Activated T-helper 1 cell treated with anti-CD3 and anti-CD28 coated beads, Interleukin-12 subunit alpha, Interleukin-12 subunit beta, Interleukin-2, Interleukin-4 antibody, amounts not matched to agents 30 ng/mL and 10 ng/mL and 1 ng/mL, durations not matched to agents 14 hours and 24 hours and 36 hours (primary cell): ENCODE measurements at regions of chr2 and their contacts with region 1.

Region 1: GRCh38 chr2:43773876-43774613 is at the start of gene DYNC2LI1:
- DNase-seq: peak; percentile 71
- H3K4me3 Mint-ChIP-seq: peak within 1 kb of the TSS; percentile 92
- H3K27ac Mint-ChIP-seq: peak within 1 kb of the TSS; percentile 79
- H3K4me1 Mint-ChIP-seq: peaks cover 19% of the 10 kb centered on the region
- H3K27me3 Mint-ChIP-seq: peaks cover 3% of the 10 kb centered on the region
- total RNA-seq, gene DYNC2LI1: 6.2 and 6.6 TPM in 2 replicates

Region 2: GRCh38 chr2:43637030-43637803 is 136.8 kb before region 1 on chr2 and contains the start of gene PLEKHH2:
- intact Hi-C with region 1: loop called (anchors 2 kb)
- DNase-seq: peak; percentile 81
- H3K4me3 Mint-ChIP-seq: peak within 1 kb of the TSS; percentile 84
- H3K27ac Mint-ChIP-seq: no peak within 1 kb of the TSS
- H3K4me1 Mint-ChIP-seq: peaks cover 6% of the 10 kb centered on the region
- H3K27me3 Mint-ChIP-seq: peaks cover 45% of the 10 kb centered on the region
- total RNA-seq, gene PLEKHH2: 0.12 and 0.13 TPM in 2 replicates

Region 3: GRCh38 chr2:43995733-43996533 is 221.9 kb after region 1 on chr2 and contains the start of gene LRPPRC:
- intact Hi-C with region 1: loop called (anchors 2 kb)
- DNase-seq: peak; percentile 85
- H3K4me3 Mint-ChIP-seq: peak within 1 kb of the TSS; percentile 95
- H3K27ac Mint-ChIP-seq: peak within 1 kb of the TSS; percentile 94
- H3K4me1 Mint-ChIP-seq: peaks cover 45% of the 10 kb centered on the region
- H3K27me3 Mint-ChIP-seq: peaks cover 2% of the 10 kb centered on the region
- total RNA-seq, gene LRPPRC: 150 and 162 TPM in 2 replicates